Activated B cell treated with CpG ODN at 0.5 μM for 24 hours (primary cell): ENCODE measurements at regions of chr2 and their contacts with region 1.

Region 1: GRCh38 chr2:141118836-141119235 is 1012.0 kb downstream of the LRP1B start:
- DNase-seq: no peak
- ATAC-seq: no peak
- H3K4me3 Mint-ChIP-seq: no peak overlapping the region
- H3K27ac Mint-ChIP-seq: no peak overlapping the region
- H3K4me1 Mint-ChIP-seq: no peaks in the 10 kb centered on the region
- H3K27me3 Mint-ChIP-seq: no peaks in the 10 kb centered on the region
- CTCF ChIP-seq: no peak

Region 2: GRCh38 chr2:140698636-140699035 is 420.2 kb before region 1 on chr2:
- CTCF ChIA-PET with region 1: no interaction called
- POLR2A ChIA-PET with region 1: no interaction called
- intact Hi-C with region 1: no loop called
- DNase-seq: no peak
- ATAC-seq: no peak
- H3K4me3 Mint-ChIP-seq: no peak overlapping the region
- H3K27ac Mint-ChIP-seq: no peak overlapping the region
- H3K4me1 Mint-ChIP-seq: no peaks in the 10 kb centered on the region
- H3K27me3 Mint-ChIP-seq: no peaks in the 10 kb centered on the region
- CTCF ChIP-seq: no peak

Region 3: GRCh38 chr2:141195087-141195486 is 76.3 kb after region 1 on chr2:
- CTCF ChIA-PET with region 1: no interaction called
- POLR2A ChIA-PET with region 1: no interaction called
- intact Hi-C with region 1: no loop called
- DNase-seq: no peak
- ATAC-seq: no peak
- H3K4me3 Mint-ChIP-seq: no peak overlapping the region
- H3K27ac Mint-ChIP-seq: no peak overlapping the region
- H3K4me1 Mint-ChIP-seq: no peaks in the 10 kb centered on the region
- H3K27me3 Mint-ChIP-seq: no peaks in the 10 kb centered on the region
- CTCF ChIP-seq: no peak

Region 4: DNA sequence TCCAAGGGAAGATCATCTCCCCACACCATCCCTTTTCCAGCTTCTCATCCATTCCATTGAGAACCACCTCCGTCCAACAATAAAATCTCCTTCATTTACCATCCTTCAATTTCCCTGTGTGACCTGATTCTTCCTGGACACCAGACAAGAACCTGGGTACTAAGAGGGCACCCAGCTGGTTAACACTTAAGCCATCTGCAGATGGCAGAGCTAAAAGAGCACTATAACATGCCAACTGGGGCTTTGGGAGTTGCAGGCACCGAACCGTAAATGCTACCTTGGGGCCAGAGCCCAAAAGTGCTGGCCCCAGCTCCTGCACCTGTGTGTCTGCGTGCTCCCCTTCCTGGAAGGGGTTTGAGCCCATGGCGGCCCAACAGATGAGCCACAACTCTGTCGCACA is 357.0 kb after region 1 on chr2:
- CTCF ChIA-PET with region 1: no interaction called
- POLR2A ChIA-PET with region 1: interaction called, 13 read pairs
- intact Hi-C with region 1: no loop called
- DNase-seq: no peak
- ATAC-seq: no peak
- H3K4me3 Mint-ChIP-seq: no peak overlapping the region
- H3K27ac Mint-ChIP-seq: no peak overlapping the region
- H3K4me1 Mint-ChIP-seq: no peaks in the 10 kb centered on the region
- H3K27me3 Mint-ChIP-seq: no peaks in the 10 kb centered on the region
- CTCF ChIP-seq: no peak